Mammary epithelial cell (primary cell): ENCODE measurements at regions of chr1 and their contacts with region 1.

Region 1: GRCh38 chr1:182198049-182198501 is 136.6 kb upstream of the ZNF648 start:
- DNase-seq: no peak
- H3K4me3 ChIP-seq: no peak overlapping the region
- H3K27ac ChIP-seq: no peak overlapping the region
- H3K4me1 ChIP-seq: peaks cover 5% of the 10 kb centered on the region
- H3K27me3 ChIP-seq: no peaks in the 10 kb centered on the region
- CTCF ChIP-seq: peak; percentile 22 to 50

Region 2: GRCh38 chr1:182175361-182175931 is 22.6 kb before region 1 on chr1:
- CTCF ChIA-PET with region 1: no interaction called
- dilution Hi-C with region 1: no loop called
- in situ Hi-C with region 1: no loop called
- intact Hi-C with region 1: no loop called
- DNase-seq: peak; percentile 79
- H3K4me3 ChIP-seq: no peak overlapping the region
- H3K27ac ChIP-seq: no peak overlapping the region
- H3K4me1 ChIP-seq: peaks cover 22% of the 10 kb centered on the region
- H3K27me3 ChIP-seq: no peaks in the 10 kb centered on the region
- CTCF ChIP-seq: no peak

Region 3: DNA sequence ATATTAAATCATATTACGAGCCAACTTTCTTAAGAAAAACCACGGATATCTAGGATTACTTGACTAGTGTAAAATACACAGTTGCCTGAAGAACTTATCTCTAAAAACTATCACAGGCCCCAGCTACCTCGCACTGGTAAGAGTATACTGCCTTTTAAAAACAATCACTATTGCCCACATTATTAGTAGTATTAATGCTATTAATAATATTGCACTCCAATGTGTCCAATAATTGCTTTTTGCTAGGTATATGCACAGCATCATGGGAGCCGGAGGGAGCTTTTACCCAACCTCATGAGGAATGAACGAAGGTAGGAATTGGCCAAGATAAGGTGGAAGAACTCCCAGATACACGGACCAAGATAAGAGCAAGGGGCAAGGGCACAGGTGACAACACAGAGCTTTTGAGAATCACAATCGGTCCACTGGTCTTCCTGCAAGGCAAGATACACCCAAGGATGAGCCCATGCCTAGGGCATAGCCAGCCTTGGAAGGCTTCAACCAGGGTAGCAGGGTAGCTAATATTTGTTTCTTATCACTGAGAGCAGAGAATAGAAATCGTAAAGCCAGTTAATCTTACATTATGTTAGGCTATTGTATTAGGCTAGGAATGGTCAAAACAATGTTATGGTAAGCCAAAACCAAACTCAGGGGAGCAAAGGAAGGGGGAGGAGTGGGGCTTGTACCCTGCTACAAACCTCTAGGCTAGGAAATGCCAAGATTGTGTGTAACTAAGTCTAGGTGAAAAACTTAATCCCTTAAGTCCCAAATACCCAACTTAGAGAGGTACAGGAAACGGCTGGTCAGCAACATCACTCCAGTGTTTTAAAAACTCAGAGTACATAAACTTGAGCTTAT is 184.1 kb after region 1 on chr1:
- CTCF ChIA-PET with region 1: no interaction called
- dilution Hi-C with region 1: no loop called
- in situ Hi-C with region 1: no loop called
- intact Hi-C with region 1: no loop called
- DNase-seq: no peak
- H3K4me3 ChIP-seq: no peak overlapping the region
- H3K27ac ChIP-seq: no peak overlapping the region
- H3K4me1 ChIP-seq: no peaks in the 10 kb centered on the region
- H3K27me3 ChIP-seq: no peaks in the 10 kb centered on the region
- CTCF ChIP-seq: no peak

Region 4: GRCh38 chr1:182397771-182398393 is 199.8 kb after region 1 on chr1:
- CTCF ChIA-PET with region 1: no interaction called
- dilution Hi-C with region 1: no loop called
- in situ Hi-C with region 1: no loop called
- intact Hi-C with region 1: loop called (anchors 5 kb)
- DNase-seq: peak; percentile 75
- H3K4me3 ChIP-seq: no peak overlapping the region
- H3K27ac ChIP-seq: no peak overlapping the region
- H3K4me1 ChIP-seq: peaks cover 18% of the 10 kb centered on the region
- H3K27me3 ChIP-seq: no peaks in the 10 kb centered on the region
- CTCF ChIP-seq: no peak